Activated CD4-positive, alpha-beta T cell treated with anti-CD3 and anti-CD28 coated beads for 36 hours (primary cell): ENCODE measurements at regions of chr9 and their contacts with region 1.

Region 1: GRCh38 chr9:20558566-20559016 is 63.7 kb downstream of the MLLT3 start:
- DNase-seq: peak; percentile 61
- ATAC-seq: peak; percentile 92
- H3K4me3 Mint-ChIP-seq: no peak overlapping the region
- H3K27ac Mint-ChIP-seq: peak overlapping the region; percentile 86
- H3K4me1 Mint-ChIP-seq: peaks cover 85% of the 10 kb centered on the region
- H3K27me3 Mint-ChIP-seq: no peaks in the 10 kb centered on the region

Region 2: GRCh38 chr9:19925817-19926503 is 632.6 kb before region 1 on chr9:
- CTCF ChIA-PET with region 1: no interaction called
- POLR2A ChIA-PET with region 1: no interaction called
- intact Hi-C with region 1: loop called in 1 of 2 experiments (anchors 10 kb)
- DNase-seq: peak; percentile 87
- ATAC-seq: peak; percentile 98
- H3K4me3 Mint-ChIP-seq: peak overlapping the region; percentile 60
- H3K27ac Mint-ChIP-seq: peak overlapping the region; percentile 22
- H3K4me1 Mint-ChIP-seq: peaks cover 15% of the 10 kb centered on the region
- H3K27me3 Mint-ChIP-seq: peaks cover 16% of the 10 kb centered on the region

Region 3: GRCh38 chr9:20209391-20210340 is 348.9 kb before region 1 on chr9:
- CTCF ChIA-PET with region 1: no interaction called
- POLR2A ChIA-PET with region 1: no interaction called
- intact Hi-C with region 1: loop called in 1 of 2 experiments (anchors 2 kb)
- DNase-seq: peak; percentile 77
- ATAC-seq: peak; percentile 79
- H3K4me3 Mint-ChIP-seq: peak overlapping the region; percentile 31
- H3K27ac Mint-ChIP-seq: peak overlapping the region; percentile 84
- H3K4me1 Mint-ChIP-seq: peaks cover 25% of the 10 kb centered on the region
- H3K27me3 Mint-ChIP-seq: no peaks in the 10 kb centered on the region

Region 4: DNA sequence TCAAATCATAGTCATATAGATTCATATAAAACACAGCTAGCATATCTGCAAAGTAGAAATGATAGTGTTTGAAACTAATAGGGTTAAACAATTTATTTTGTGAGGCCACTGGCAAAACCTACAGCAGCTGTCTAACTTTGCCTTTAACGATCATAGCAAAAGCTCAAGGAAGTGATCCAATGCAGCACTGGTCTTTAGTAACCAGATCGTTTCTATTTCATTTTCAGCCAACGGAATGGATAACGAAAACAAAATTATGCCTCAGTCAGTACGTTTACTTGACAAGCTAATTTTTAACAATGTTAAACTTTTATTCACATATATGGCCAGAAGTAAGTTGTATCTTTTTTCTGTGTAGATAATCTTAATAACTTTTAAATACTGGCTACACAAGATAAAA is 46.0 kb after region 1 on chr9:
- CTCF ChIA-PET with region 1: interaction called, 3 read pairs
- POLR2A ChIA-PET with region 1: no interaction called
- intact Hi-C with region 1: loop called (anchors 2 to 5 kb)
- DNase-seq: no peak
- ATAC-seq: peak; percentile 87
- H3K4me3 Mint-ChIP-seq: peak overlapping the region; percentile 56
- H3K27ac Mint-ChIP-seq: no peak overlapping the region
- H3K4me1 Mint-ChIP-seq: peaks cover 72% of the 10 kb centered on the region
- H3K27me3 Mint-ChIP-seq: no peaks in the 10 kb centered on the region

Region 5: DNA sequence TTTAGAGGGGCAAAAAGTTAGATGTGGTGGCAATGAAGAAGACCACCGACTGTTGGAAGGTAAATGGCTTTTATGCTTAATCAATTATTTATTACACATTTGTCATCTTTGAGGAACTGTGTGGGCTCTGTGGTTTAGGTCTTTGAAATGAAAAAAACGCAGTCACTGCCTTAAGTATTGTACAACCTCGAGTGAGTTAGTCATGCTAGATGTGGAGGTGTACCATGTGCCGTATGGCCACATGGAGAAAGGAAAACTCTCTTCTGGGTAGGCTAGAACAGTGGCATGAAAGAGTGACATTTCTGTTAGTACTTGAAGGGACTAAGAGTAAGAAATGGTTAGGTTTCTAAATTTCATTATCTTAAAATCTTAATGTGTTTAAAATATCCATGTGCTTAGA is 306.8 kb after region 1 on chr9:
- CTCF ChIA-PET with region 1: no interaction called
- POLR2A ChIA-PET with region 1: no interaction called
- intact Hi-C with region 1: no loop called
- DNase-seq: no peak
- ATAC-seq: peak; percentile 90
- H3K4me3 Mint-ChIP-seq: no peak overlapping the region
- H3K27ac Mint-ChIP-seq: no peak overlapping the region
- H3K4me1 Mint-ChIP-seq: peaks cover 10% of the 10 kb centered on the region
- H3K27me3 Mint-ChIP-seq: no peaks in the 10 kb centered on the region

Region 6: GRCh38 chr9:21031091-21031807 is 472.7 kb after region 1 on chr9 and contains the start of gene HACD4:
- CTCF ChIA-PET with region 1: no interaction called
- POLR2A ChIA-PET with region 1: no interaction called
- intact Hi-C with region 1: loop called in 1 of 2 experiments (anchors 2 kb)
- DNase-seq: peak; percentile 79
- ATAC-seq: peak; percentile 79
- H3K4me3 Mint-ChIP-seq: peak within 1 kb of the TSS; percentile 53
- H3K27ac Mint-ChIP-seq: peak within 1 kb of the TSS; percentile 71
- H3K4me1 Mint-ChIP-seq: peaks cover 26% of the 10 kb centered on the region
- H3K27me3 Mint-ChIP-seq: no peaks in the 10 kb centered on the region
- total RNA-seq, gene HACD4: 2.7 to 3.0 TPM